Left cardiac atrium (tissue), 4 donors: ENCODE measurements at regions of chr2 and their contacts with region 1.

Region 1: GRCh38 chr2:70871398-70872211 is 36.0 kb upstream of the CD207 start:
- DNase-seq: peak; percentile 91
- ATAC-seq: peak; percentile 96 to 97

Region 2: DNA sequence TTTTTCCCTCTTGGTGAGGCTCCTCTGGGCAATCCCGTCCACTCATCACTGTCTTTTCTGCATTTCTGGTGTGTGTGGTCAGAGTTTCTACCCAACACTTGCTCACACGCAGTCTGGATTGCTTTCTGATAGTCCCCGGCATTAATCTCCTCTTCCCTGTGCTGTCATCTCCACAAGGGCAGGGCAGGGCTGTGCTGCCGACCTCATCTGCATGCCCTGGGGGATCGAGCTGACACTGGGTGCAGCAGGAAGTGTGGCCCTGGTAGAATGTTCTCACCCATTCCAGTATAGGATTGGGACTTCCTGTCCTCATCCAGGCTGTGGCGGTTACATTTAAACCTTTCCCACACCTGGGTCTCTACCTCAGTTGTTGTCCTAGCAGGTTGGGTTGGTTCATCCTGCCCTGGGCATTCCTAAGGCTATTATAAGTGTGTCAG is 489.8 kb before region 1 on chr2:
- intact Hi-C with region 1: no loop called
- DNase-seq: no peak
- ATAC-seq: no peak

Region 3: DNA sequence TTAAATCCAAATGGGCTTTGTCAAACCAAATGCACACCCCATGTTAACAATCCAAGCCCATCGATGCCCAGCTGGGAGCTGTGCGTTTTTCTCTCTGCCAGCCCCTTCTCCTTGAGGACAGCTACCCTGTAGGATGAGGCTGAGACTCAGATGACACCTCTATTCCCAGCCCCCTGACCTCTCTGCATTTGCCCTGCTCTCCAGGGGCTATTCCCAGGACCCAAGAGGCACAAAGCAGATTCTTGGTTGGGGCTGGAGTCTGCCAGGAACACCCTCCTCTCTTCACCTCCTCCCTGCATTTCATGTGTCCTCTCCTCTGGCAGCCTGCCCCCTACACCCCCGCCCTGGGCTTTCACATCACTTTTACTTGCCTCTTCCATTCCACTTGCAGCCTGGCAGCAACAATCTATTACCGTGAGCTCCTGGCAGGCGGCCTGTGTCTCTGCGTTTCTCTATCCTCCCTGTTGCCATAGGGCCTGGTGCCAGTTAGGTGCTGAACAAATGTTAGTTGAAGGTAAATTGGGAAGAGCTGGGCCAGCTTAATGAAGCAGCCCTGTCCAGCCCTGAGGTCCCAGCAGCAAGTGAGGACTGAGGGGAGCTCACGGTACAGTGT is 155.4 kb before region 1 on chr2:
- intact Hi-C with region 1: no loop called
- DNase-seq: no peak
- ATAC-seq: no peak

Region 4: DNA sequence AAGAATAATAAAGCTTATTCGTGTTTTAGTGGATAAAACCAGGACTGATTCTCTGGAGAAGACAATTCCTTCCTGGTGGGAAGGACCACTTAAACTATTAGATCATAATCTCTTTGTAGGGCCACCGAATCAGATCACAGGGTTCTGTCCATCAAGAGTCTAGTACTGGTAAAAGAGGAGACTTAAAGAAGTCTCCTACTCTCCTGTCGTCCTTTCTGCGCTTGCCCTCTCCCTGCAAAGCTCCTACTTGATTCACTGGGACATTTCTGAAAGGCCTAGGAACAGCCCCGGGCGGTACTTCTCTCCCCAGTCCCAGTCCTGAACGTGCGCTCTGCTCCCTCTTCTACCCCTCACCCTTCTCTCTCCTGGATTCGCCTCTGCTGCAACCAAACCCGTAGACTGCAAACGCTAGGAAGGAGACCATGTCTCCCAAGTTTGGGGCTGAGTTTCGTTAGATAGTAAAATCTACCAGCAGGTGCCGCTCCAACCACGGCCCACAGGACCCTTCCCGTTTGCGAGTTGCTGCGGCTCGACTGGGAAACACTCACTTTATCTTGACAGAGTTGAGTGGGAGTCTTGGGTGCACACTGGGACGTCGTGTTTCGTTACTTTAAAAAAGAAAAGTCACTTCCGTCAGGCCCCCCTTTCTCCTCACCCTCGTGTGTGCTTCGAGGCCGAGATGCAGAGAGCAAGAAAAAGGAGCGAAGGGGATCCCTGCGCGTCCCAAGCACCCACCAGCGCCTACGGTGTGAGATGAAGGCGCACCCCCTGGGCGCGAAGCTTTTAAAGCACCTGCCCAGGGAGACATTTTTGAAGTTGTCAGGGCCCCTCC is 82.1 kb before region 1 on chr2:
- intact Hi-C with region 1: loop called in 1 of 2 experiments (anchors 10 kb)
- DNase-seq: peak; percentile 73
- ATAC-seq: peak; percentile 71 to 85

Region 5: DNA sequence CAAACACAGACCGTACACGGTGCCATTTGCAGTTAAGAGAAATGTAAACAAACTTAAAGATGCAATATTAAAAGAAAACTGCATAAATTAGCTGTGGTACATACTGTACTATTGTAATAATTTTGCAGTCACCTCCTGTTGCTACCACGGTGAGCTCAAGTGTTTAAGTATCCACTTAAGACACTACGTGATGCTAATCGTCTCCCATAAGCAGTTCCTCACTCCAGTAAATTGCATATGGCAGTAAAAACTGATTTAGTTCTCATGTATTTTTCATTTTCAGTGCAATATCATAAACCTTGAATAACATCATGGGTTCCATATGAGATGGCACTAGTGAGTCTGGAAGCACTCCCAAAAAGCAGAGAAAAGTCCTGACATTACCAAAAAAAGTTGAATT is 65.6 kb before region 1 on chr2:
- intact Hi-C with region 1: no loop called
- DNase-seq: no peak
- ATAC-seq: no peak

Region 6: DNA sequence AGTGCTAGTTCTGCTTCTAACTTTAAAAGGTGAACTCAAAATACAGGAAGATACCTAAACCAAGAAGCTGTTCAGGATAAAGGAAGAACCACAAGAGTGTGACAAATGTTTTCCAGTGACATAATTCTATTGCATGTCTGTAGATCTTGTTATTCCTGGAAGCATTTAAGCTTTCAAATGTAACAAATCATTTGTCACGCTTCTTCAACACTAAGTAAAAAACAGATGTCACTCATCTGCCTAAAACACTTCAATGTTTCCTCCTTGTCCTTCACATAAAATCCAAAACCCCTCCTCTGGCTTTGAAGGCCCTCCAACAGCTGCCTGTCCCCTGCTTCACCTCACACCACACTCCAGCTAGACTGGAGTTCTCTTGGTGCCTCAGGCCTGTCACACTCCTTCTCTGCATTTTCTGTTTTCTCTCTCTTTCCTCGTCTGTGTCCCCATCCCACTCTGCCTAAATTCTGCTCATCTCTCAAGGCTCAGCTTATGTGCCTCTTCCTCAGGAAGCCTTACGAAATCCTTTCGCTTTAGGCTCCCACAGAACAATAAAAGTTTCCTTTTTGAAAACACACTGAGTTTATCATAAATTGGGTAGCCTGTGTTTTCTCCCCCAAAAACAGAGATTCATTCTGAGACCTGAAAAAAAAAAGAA is 44.8 kb before region 1 on chr2:
- intact Hi-C with region 1: no loop called
- DNase-seq: no peak
- ATAC-seq: no peak

Region 7: DNA sequence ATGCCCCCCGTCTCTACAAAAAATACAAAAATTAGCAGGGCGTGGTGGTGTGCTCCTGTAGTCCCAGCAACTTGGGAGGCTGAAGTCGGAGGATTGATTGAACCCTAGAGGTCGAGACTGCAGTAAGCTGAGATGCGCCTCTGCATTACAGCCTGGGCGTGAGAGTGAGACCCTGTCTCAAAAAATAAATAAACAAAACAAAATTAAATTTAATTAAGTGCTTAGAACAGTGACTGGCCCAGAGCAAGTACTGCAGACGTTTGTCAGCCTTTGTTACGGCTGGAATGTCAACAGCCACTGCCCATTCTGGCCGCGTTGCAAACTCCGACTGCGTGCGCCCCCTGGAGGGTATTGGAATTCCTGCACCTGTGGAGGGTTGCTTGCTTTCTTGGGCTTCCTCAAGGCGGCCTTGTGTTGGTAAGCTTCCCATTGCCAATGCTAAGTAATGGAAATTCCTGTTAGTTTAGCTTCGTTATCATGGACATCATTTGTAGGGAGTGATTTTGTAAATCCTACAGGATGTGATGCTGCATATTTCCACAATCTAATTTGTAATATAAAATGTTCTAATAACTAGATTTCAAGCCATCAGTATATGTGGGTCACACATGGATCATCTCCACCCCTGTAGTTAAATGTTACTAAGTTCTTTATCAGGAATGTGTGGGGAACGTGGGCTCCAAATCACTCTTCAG is 48.2 kb after region 1 on chr2:
- intact Hi-C with region 1: loop called (anchors 2 to 5 kb)
- DNase-seq: peak; percentile 79
- ATAC-seq: peak; percentile 82 to 88

Region 8: GRCh38 chr2:70926042-70926441 is 54.4 kb after region 1 on chr2:
- intact Hi-C with region 1: loop called (anchors 2 to 5 kb)
- DNase-seq: no peak
- ATAC-seq: no peak

Region 9: GRCh38 chr2:70948337-70949003 is 76.9 kb after region 1 on chr2:
- intact Hi-C with region 1: loop called in 1 of 2 experiments (anchors 2 kb)
- DNase-seq: peak; percentile 85
- ATAC-seq: peak; percentile 95 to 96